Activated CD4-positive, alpha-beta T cell treated with anti-CD3 and anti-CD28 coated beads for 36 hours (primary cell): ENCODE measurements at regions of chr6 and their contacts with region 1.

Region 1: DNA sequence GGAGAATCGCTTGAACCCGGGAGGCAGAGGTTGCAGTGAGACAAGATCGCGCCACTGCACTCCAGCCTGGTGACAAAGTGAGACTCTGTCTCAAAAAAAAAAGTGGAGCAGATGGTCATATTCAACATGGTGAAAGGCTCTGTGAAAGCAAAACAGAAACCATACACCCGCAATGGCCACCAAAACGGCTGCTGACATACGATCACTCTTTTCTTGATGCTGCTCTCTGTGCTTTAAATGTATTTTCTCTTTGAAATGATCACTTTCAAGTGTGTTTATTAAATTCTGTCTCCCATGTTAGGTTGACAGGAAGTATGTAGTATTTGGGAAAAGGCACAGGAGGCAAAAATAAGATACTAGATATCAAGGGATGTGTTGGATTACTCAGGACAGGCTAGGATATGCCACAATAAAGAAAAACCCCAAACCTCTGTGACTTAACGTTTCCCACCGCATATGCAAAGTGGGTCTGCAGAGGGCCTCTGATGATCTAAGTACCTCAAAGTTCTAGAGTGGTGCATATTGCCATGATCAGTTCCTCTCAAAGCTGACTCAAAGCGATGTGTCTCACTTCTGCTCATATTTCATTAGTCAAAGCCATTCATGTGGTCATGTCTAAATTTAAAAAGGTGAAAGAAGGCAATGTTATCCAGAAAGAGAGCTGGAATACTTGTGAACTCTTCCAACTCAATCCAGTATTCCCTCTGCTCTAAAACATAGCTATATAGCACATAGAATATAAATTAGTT is 155.1 kb upstream of the SOX4 start:
- DNase-seq: peak; percentile 73
- ATAC-seq: peak; percentile 94
- H3K4me3 Mint-ChIP-seq: peak overlapping the region; percentile 39
- H3K27ac Mint-ChIP-seq: peak overlapping the region; percentile 55
- H3K4me1 Mint-ChIP-seq: peaks cover 21% of the 10 kb centered on the region
- H3K27me3 Mint-ChIP-seq: peaks cover 11% of the 10 kb centered on the region

Region 2: GRCh38 chr6:20534295-20535262 is 903.8 kb before region 1 on chr6 and contains the start of gene CDKAL1:
- CTCF ChIA-PET with region 1: no interaction called
- POLR2A ChIA-PET with region 1: no interaction called
- intact Hi-C with region 1: loop called in 1 of 2 experiments (anchors 2 kb)
- DNase-seq: peak; percentile 94
- ATAC-seq: peak; percentile 89
- H3K4me3 Mint-ChIP-seq: peak within 1 kb of the TSS; percentile 94
- H3K27ac Mint-ChIP-seq: peak within 1 kb of the TSS; percentile 97
- H3K4me1 Mint-ChIP-seq: peaks cover 36% of the 10 kb centered on the region
- H3K27me3 Mint-ChIP-seq: no peaks in the 10 kb centered on the region
- total RNA-seq, gene CDKAL1: 22.1 to 23.4 TPM

Region 3: GRCh38 chr6:20599302-20600051 is 838.9 kb before region 1 on chr6:
- CTCF ChIA-PET with region 1: no interaction called
- POLR2A ChIA-PET with region 1: no interaction called
- intact Hi-C with region 1: loop called in 1 of 2 experiments (anchors 5 kb)
- DNase-seq: no peak
- ATAC-seq: peak; percentile 97
- H3K4me3 Mint-ChIP-seq: no peak overlapping the region
- H3K27ac Mint-ChIP-seq: no peak overlapping the region
- H3K4me1 Mint-ChIP-seq: peaks cover 11% of the 10 kb centered on the region
- H3K27me3 Mint-ChIP-seq: no peaks in the 10 kb centered on the region

Region 4: GRCh38 chr6:20877008-20877937 is 561.1 kb before region 1 on chr6:
- CTCF ChIA-PET with region 1: no interaction called
- POLR2A ChIA-PET with region 1: no interaction called
- intact Hi-C with region 1: loop called in 1 of 2 experiments (anchors 5 kb)
- DNase-seq: peak; percentile 62
- ATAC-seq: peak; percentile 98
- H3K4me3 Mint-ChIP-seq: no peak overlapping the region
- H3K27ac Mint-ChIP-seq: peak overlapping the region; percentile 74
- H3K4me1 Mint-ChIP-seq: peaks cover 14% of the 10 kb centered on the region
- H3K27me3 Mint-ChIP-seq: no peaks in the 10 kb centered on the region

Region 5: GRCh38 chr6:21263531-21264287 is 174.7 kb before region 1 on chr6:
- CTCF ChIA-PET with region 1: no interaction called
- POLR2A ChIA-PET with region 1: no interaction called
- intact Hi-C with region 1: loop called (anchors 1 to 10 kb)
- DNase-seq: peak; percentile 34
- ATAC-seq: no peak
- H3K4me3 Mint-ChIP-seq: no peak overlapping the region
- H3K27ac Mint-ChIP-seq: no peak overlapping the region
- H3K4me1 Mint-ChIP-seq: peaks cover 22% of the 10 kb centered on the region
- H3K27me3 Mint-ChIP-seq: peaks cover 6% of the 10 kb centered on the region

Region 6: GRCh38 chr6:22062807-22063408 is 624.5 kb after region 1 on chr6:
- CTCF ChIA-PET with region 1: no interaction called
- POLR2A ChIA-PET with region 1: no interaction called
- intact Hi-C with region 1: loop called (anchors 2 to 10 kb)
- DNase-seq: peak; percentile 82
- ATAC-seq: peak; percentile 83
- H3K4me3 Mint-ChIP-seq: peak overlapping the region; percentile 43
- H3K27ac Mint-ChIP-seq: peak overlapping the region; percentile 86
- H3K4me1 Mint-ChIP-seq: peaks cover 40% of the 10 kb centered on the region
- H3K27me3 Mint-ChIP-seq: peaks cover 12% of the 10 kb centered on the region